Activated naive CD4-positive, alpha-beta T cell treated with anti-CD3 and anti-CD28 coated beads for 36 hours (primary cell): ENCODE measurements at regions of chr10 and their contacts with region 1.

Region 1: DNA sequence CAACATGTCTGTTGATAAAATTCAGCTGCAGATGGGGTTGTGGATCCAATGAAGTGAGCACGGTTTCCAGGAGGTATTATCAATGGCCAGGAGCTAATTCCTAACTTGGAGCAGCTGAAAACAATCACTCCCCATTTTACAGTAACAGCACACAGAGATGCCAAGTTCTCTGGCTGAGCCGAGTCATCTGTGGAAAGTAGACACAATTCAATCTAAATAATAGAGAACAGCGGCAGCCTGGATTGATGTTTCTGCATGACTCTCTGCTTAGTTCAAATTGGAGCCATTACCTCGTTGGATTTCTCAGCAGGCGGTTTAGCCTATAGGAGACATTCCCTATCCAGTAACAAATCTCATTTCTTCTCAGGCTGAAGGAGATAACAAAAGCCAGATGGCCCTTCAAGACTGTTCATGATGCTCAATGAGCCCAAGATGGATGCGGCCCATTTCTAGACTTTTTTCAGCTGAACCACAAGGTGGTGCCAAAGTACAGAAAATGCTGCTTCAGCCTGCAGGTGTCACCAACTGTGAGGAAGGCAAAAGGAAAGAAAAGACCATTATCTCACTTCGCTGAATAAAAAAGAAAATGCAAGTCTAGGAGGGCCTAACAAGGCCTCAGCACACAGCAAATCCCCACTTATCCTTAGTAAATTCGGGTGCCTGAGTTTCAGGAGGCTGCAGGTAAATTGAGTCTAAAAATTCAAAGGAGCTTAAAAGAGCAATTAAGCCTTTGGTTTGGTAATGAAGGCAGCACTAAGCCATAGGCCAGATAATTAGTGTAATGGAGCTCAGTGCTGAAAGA is 83.7 kb downstream of the SLC16A9 start:
- DNase-seq: peak; percentile 59
- H3K4me3 Mint-ChIP-seq: no peak overlapping the region
- H3K27ac Mint-ChIP-seq: no peak overlapping the region
- H3K4me1 Mint-ChIP-seq: peaks cover 3% of the 10 kb centered on the region
- H3K27me3 Mint-ChIP-seq: peaks cover 2% of the 10 kb centered on the region

Region 2: DNA sequence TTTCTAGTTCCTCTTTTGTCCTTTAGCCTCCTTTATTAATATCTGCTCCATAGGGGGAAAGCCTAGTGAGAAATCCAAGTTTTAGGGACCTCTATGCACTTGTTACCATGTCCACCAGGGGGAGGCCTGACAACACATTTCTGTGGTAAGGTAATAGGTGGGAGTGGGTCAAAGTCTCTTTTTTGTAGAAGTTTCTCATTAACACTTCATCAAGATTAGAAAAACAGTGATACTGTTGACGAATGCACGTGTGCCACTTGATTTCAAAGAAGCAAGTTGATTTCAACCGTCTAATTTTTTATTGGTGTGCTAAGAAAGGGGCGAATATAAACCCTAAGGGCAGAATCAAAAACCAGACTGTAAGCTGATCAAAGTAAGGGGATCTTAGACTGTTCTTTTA is 1326.3 kb before region 1 on chr10:
- CTCF ChIA-PET with region 1: no interaction called
- intact Hi-C with region 1: loop called (anchors 10 kb)
- DNase-seq: peak; percentile 78
- H3K4me3 Mint-ChIP-seq: no peak overlapping the region
- H3K27ac Mint-ChIP-seq: no peak overlapping the region
- H3K4me1 Mint-ChIP-seq: no peaks in the 10 kb centered on the region
- H3K27me3 Mint-ChIP-seq: peaks cover 5% of the 10 kb centered on the region

Region 3: DNA sequence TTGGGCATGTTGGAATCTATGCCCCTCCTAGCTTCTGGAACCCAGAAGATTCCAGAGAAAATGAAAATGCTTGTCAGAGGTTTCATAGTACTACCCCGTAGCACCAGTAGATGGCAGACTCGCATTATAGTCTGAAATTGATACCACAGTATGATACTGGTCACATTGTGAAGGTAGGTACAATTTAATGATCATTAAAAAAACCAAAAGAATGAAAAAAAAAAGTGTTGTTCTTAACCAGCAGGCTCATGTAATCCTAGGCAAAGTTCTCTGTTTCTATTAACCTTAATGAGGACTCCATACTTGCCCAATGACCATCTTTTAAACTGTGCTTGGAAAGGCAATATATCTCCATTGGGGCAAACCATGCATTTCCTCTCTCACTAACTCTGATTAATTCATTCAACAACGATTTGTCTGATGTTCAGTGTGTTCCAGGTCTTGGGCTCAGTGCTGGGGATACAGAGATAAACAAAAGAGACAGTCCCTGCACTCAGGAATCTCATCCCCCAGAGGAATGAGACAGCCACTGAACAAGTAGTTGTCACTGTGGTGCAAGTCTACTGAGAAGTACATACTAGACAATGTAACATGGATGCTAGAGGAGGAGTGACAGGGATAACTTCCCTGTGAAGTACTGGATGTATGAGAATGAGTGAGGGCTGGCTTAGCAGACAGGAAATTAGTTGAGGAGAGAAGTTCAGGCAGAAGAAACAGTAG is 673.0 kb before region 1 on chr10:
- CTCF ChIA-PET with region 1: interaction called, 3 read pairs
- intact Hi-C with region 1: loop called (anchors 1 kb)
- DNase-seq: peak; percentile 32
- H3K4me3 Mint-ChIP-seq: no peak overlapping the region
- H3K27ac Mint-ChIP-seq: no peak overlapping the region
- H3K4me1 Mint-ChIP-seq: no peaks in the 10 kb centered on the region
- H3K27me3 Mint-ChIP-seq: no peaks in the 10 kb centered on the region

Region 4: GRCh38 chr10:59580026-59580863 is 45.7 kb before region 1 on chr10:
- CTCF ChIA-PET with region 1: no interaction called
- intact Hi-C with region 1: no loop called
- DNase-seq: no peak
- H3K4me3 Mint-ChIP-seq: no peak overlapping the region
- H3K27ac Mint-ChIP-seq: no peak overlapping the region
- H3K4me1 Mint-ChIP-seq: no peaks in the 10 kb centered on the region
- H3K27me3 Mint-ChIP-seq: peaks cover 8% of the 10 kb centered on the region

Region 5: GRCh38 chr10:59808896-59809643 is 183.1 kb after region 1 on chr10:
- CTCF ChIA-PET with region 1: interaction called, 13 read pairs
- intact Hi-C with region 1: loop called (anchors 1 kb)
- DNase-seq: peak; percentile 90
- H3K4me3 Mint-ChIP-seq: no peak overlapping the region
- H3K27ac Mint-ChIP-seq: no peak overlapping the region
- H3K4me1 Mint-ChIP-seq: no peaks in the 10 kb centered on the region
- H3K27me3 Mint-ChIP-seq: no peaks in the 10 kb centered on the region

Region 6: GRCh38 chr10:60208676-60209269 is 582.9 kb after region 1 on chr10:
- CTCF ChIA-PET with region 1: no interaction called
- intact Hi-C with region 1: loop called (anchors 1 kb)
- DNase-seq: no peak
- H3K4me3 Mint-ChIP-seq: no peak overlapping the region
- H3K27ac Mint-ChIP-seq: no peak overlapping the region
- H3K4me1 Mint-ChIP-seq: peaks cover 17% of the 10 kb centered on the region
- H3K27me3 Mint-ChIP-seq: no peaks in the 10 kb centered on the region

Region 7: DNA sequence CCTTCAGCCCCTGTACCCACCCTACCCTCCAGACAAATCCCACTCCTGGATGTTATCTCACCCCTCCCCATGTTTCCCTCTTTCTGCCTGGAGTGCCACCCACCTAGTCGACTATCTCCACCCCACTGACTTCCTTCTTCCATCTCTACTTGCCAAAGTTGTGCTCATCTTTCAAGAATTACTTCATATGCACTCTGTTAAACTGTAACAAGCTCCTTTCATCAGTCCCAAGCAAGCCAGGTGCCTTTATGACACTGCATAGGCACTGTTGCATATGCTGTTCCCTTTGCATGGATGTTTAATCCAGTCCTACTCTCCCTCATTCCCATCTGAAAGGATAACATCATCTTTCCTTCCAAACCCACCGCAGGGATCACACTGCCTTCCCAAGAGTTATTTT is 1143.5 kb after region 1 on chr10:
- CTCF ChIA-PET with region 1: interaction called, 3 read pairs
- intact Hi-C with region 1: loop called (anchors 5 kb)
- DNase-seq: no peak
- H3K4me3 Mint-ChIP-seq: no peak overlapping the region
- H3K27ac Mint-ChIP-seq: no peak overlapping the region
- H3K4me1 Mint-ChIP-seq: no peaks in the 10 kb centered on the region
- H3K27me3 Mint-ChIP-seq: no peaks in the 10 kb centered on the region

Region 8: DNA sequence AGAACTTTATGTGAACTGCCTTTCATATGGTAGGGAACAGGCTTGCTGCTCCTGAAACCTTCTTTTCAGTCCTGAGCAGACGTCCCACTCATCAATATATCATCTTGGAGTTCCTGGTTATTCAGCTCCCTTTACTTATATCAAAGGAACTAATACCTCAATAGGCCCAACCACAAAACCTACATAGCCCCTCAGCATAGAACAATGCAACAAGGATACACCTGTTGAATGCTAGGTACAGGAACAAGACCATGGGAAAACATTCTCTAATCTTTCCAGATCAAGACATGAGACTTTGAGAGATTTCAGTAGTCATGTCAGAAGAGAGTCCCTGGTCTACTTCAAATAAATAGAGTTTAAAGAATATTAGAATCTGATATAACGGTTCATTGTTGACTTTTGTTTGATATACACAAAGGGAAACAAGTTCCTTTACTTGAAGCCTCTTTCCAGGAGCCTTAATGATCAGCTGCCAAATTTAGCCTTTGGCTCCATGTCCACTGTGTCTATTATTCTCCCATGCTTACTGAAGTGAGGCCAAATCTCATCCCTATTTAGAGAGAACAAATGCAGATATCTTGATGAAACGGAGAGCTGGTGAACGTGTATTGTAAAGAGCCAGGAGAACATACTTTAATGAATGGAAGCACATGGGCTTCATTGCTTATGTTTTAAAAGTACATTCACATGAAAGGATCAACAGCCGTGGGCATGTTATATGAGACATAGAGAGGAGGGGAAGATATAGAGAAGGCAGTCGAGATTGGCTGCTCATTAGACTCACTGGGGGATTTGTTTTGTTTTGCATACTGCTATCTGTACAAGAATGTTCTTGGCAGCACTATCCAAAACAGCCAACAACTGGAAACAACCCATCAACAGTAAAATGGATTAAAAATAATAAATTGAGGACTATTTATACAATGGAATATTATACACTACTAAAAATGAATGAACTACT is 1308.6 kb after region 1 on chr10:
- CTCF ChIA-PET with region 1: no interaction called
- intact Hi-C with region 1: no loop called
- DNase-seq: no peak
- H3K4me3 Mint-ChIP-seq: no peak overlapping the region
- H3K27ac Mint-ChIP-seq: no peak overlapping the region
- H3K4me1 Mint-ChIP-seq: no peaks in the 10 kb centered on the region
- H3K27me3 Mint-ChIP-seq: peaks cover 13% of the 10 kb centered on the region